ENCODE measurements at regions of chr6 and their contacts with region 1.

Region 1: GRCh38 chr6:142621822-142622221 is 320.0 kb downstream of the ADGRG6 start:
- DNase-seq: no peak
- H3K4me3 ChIP-seq: no peak overlapping the region
- H3K27ac ChIP-seq: no peak overlapping the region
- H3K4me1 ChIP-seq: no peaks in the 10 kb centered on the region
- H3K27me3 ChIP-seq: no peaks in the 10 kb centered on the region
- CTCF ChIP-seq: no peak

Region 2: DNA sequence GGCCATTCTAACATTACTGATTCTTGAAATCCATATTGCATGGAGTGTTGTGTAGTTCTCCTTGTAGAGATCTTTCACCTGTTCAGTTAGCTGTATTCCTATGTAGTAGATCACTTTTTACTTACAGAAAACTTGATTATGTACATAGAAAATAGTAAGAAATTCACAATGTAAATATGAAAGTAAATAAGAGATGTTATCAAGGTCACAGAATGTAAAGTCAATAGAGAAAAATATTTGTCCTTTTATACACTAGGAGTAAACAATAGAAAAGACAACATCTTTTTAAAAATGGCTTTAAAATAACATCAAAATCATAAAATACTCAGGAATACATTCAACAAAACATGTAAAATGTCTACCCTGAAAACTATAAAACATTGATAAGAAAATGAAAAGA is 29.5 kb before region 1 on chr6:
- intact Hi-C with region 1: loop called (anchors 2 kb)
- DNase-seq: no peak
- H3K4me3 ChIP-seq: no peak overlapping the region
- H3K27ac ChIP-seq: no peak overlapping the region
- H3K4me1 ChIP-seq: no peaks in the 10 kb centered on the region
- H3K27me3 ChIP-seq: no peaks in the 10 kb centered on the region
- CTCF ChIP-seq: no peak

Measured in ascending aorta (tissue), 2 donors.